Heart left ventricle (tissue), 16 donors: ENCODE measurements at regions of chr20 and their contacts with region 1.

Region 1: DNA sequence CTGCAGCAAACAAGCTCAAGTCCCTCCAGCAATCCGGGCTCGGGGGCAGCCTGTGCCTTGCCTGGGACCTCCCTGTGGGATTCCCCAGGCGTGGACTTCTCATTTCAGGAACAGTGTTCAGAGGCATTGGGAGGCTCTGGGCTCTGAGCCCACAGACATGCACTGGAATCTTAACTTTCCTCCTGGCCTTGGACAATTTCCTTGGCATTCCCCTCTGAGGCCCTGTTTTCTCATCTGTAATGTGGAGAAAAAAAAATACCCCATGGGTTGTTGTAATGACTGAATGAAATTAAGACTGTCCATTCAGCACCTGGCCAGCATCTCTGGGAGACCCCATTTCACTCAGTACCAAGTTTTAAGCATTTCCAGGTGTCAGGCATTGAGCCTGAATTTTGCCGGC is 17.6 kb downstream of the BPIFB4 start:
- DNase-seq: no peak
- ATAC-seq: no peak
- H3K4me3 ChIP-seq: no peak overlapping the region
- H3K27ac ChIP-seq: no peak overlapping the region
- H3K4me1 ChIP-seq: no peaks in the 10 kb centered on the region
- H3K27me3 ChIP-seq: no peaks in the 10 kb centered on the region
- CTCF ChIP-seq: no peak
- POLR2A ChIP-seq: no peak

Region 2: GRCh38 chr20:33299111-33299603 is 202.2 kb after region 1 on chr20:
- intact Hi-C with region 1: loop called in 2 of 10 experiments (anchors 10 kb)
- DNase-seq: peak; percentile 31 to 79 (median 53)
- ATAC-seq: peak in 3 of 4 donors; percentile 69 to 76 (median 72)
- H3K4me3 ChIP-seq: no peak overlapping the region
- H3K27ac ChIP-seq: no peak overlapping the region
- H3K4me1 ChIP-seq: peaks cover 0 to 6% (median 0%) of the 10 kb centered on the region in 12 donors
- H3K27me3 ChIP-seq: peaks cover 0 to 17% (median 0%) of the 10 kb centered on the region in 9 donors
- CTCF ChIP-seq: peak; percentile 71 to 90 (median 85)
- POLR2A ChIP-seq: no peak